ENCODE measurements at regions of chr3 and their contacts with region 1.

Region 1: DNA sequence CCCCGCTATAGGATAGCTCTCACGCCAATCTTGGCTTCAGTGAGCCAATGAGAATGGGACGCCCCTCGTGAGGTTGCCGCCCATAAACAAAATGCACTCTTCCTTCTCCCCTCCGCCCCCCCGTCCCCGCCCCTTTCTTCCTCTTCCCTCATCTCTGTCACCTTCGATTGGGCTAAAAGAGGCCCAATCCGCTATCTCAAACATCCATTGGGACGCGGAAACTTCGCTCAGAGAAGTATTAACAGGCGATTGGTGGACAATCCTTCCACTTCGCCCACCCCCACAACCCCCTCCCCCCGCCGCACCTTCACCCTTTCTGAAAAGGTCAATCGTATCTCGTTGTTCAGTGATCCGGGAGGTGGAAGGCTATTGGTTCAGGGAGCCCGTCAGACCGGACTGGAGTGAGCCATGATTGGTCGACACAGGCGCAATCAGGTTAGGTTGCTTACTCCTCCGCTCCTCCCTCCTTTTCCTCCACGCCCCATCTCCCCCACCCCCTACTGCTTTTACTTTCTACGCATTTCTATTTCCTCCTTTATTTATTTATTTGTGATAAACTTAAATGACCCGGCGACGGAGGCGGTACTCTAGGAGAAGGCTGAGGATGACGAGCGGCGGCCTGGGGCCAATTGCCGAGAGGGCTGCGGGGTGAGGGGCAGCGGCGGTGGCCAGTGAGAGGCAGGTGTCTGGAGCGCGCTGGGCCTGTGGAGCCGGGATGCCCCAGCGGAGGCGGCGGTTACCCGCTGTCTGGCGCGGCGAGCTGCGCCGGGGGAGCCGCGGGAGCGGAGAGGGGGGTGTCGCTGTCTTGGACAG is 447 bp upstream of the ZBTB20 start:
- DNase-seq: peak; percentile 100
- H3K4me3 ChIP-seq: peak overlapping the region; percentile 81 to 96 (median 93)
- H3K27ac ChIP-seq: peak overlapping the region; percentile 97
- H3K4me1 ChIP-seq: peaks cover 6% of the 10 kb centered on the region
- H3K27me3 ChIP-seq: no peaks in the 10 kb centered on the region
- CTCF ChIP-seq: no peak
- POLR2A ChIP-seq: peak; percentile 60

Region 2: GRCh38 chr3:113696658-113697499 is 1450.7 kb before region 1 on chr3:
- CTCF ChIA-PET with region 1: no interaction called
- POLR2A ChIA-PET with region 1: no interaction called
- dilution Hi-C with region 1: no loop called
- intact Hi-C with region 1: loop called (anchors 2 kb)
- DNase-seq: peak; percentile 100
- H3K4me3 ChIP-seq: peak overlapping the region; percentile 37 to 94 (median 90)
- H3K27ac ChIP-seq: peak overlapping the region; percentile 30
- H3K4me1 ChIP-seq: peaks cover 14% of the 10 kb centered on the region
- H3K27me3 ChIP-seq: no peaks in the 10 kb centered on the region
- CTCF ChIP-seq: peak in 1 of 2 donors; percentile 14
- POLR2A ChIP-seq: no peak

Region 3: DNA sequence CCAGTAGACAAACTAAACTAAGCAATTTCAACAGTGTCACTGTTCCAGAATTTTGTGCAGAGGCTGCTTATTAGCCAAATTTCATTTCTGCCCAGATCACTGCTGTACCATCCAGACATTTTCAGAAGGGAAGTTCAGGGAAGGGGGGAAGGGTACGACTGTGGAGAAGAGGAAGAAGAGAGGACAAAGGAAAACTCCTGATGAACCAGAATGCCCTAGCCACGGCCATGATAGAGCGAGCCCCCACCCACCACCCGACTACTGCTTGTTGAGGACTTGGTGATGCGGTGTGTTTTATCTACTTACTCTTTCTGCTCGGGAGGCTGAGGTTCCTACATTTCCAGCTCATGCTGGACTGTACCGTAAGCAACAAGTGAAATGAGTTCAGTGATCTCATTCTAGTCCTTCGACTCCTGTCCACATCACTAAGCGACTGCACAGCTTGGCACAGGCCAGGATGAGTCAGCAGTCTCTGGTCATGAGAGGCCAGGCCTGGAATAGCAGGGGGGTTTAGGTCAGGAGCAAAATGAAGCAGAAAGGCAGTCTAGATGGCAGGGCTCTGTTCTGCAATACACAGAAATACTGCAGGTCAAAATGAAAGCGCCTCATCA is 522.9 kb before region 1 on chr3:
- CTCF ChIA-PET with region 1: no interaction called
- POLR2A ChIA-PET with region 1: no interaction called
- dilution Hi-C with region 1: no loop called
- intact Hi-C with region 1: loop called (anchors 2 kb)
- DNase-seq: peak; percentile 97
- H3K4me3 ChIP-seq: peak overlapping the region; percentile 21 to 88 (median 50)
- H3K27ac ChIP-seq: peak overlapping the region; percentile 99
- H3K4me1 ChIP-seq: peaks cover 36% of the 10 kb centered on the region
- H3K27me3 ChIP-seq: no peaks in the 10 kb centered on the region
- CTCF ChIP-seq: no peak
- POLR2A ChIP-seq: no peak

Region 4: DNA sequence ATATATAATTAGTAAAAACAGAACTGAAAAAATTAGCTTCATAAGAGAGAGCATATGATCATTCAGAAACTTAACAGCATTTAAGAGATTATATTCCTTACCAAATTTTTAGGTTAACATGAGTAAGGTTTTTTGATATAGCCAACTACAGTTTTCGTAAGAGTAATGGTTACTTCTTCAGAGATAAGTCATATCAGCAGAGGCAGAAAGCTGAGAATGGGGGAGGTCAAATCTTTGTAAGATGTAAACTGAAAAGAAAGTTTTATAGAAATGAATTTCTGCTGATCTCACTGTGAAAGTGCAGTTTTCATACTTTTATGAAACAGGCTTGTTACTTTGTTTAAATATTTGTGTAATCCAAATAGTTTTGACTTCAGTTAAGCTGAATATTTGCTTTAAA is 193.7 kb before region 1 on chr3:
- CTCF ChIA-PET with region 1: no interaction called
- POLR2A ChIA-PET with region 1: no interaction called
- dilution Hi-C with region 1: no loop called
- intact Hi-C with region 1: no loop called
- DNase-seq: no peak
- H3K4me3 ChIP-seq: no peak overlapping the region
- H3K27ac ChIP-seq: no peak overlapping the region
- H3K4me1 ChIP-seq: no peaks in the 10 kb centered on the region
- H3K27me3 ChIP-seq: no peaks in the 10 kb centered on the region
- CTCF ChIP-seq: no peak
- POLR2A ChIP-seq: no peak

Region 5: GRCh38 chr3:115108614-115109013 is 38.9 kb before region 1 on chr3:
- CTCF ChIA-PET with region 1: no interaction called
- POLR2A ChIA-PET with region 1: no interaction called
- dilution Hi-C with region 1: no loop called
- intact Hi-C with region 1: loop called (anchors 2 kb)
- DNase-seq: peak; percentile 22
- H3K4me3 ChIP-seq: no peak overlapping the region
- H3K27ac ChIP-seq: no peak overlapping the region
- H3K4me1 ChIP-seq: no peaks in the 10 kb centered on the region
- H3K27me3 ChIP-seq: no peaks in the 10 kb centered on the region
- CTCF ChIP-seq: no peak
- POLR2A ChIP-seq: no peak

Region 6: DNA sequence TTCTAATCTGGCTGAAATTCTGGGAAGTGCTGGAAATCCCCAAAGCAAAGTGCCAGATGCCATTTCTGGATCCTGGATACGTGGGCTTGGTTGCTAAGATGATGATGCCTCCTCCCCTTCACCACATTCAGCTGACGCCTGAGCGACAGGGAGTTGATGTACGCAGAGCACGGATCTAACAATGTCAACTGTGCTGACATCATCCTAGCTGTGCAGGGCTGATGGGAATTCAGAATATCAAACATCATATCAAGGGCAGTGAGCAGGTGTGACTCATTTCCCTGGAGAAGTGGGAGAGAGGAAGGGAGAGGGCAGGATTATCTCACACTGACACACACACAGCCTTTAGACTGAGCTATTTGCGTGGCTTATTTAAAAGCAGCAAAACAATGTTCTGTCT is 92.2 kb after region 1 on chr3:
- CTCF ChIA-PET with region 1: no interaction called
- POLR2A ChIA-PET with region 1: no interaction called
- dilution Hi-C with region 1: no loop called
- intact Hi-C with region 1: loop called (anchors 1 kb)
- DNase-seq: peak; percentile 99
- H3K4me3 ChIP-seq: no peak overlapping the region
- H3K27ac ChIP-seq: peak overlapping the region; percentile 70
- H3K4me1 ChIP-seq: peaks cover 20% of the 10 kb centered on the region
- H3K27me3 ChIP-seq: no peaks in the 10 kb centered on the region
- CTCF ChIP-seq: no peak
- POLR2A ChIP-seq: no peak

Region 7: GRCh38 chr3:115251509-115251908 is 104.0 kb after region 1 on chr3:
- CTCF ChIA-PET with region 1: no interaction called
- POLR2A ChIA-PET with region 1: no interaction called
- dilution Hi-C with region 1: no loop called
- intact Hi-C with region 1: no loop called
- DNase-seq: peak; percentile 14
- H3K4me3 ChIP-seq: no peak overlapping the region
- H3K27ac ChIP-seq: no peak overlapping the region
- H3K4me1 ChIP-seq: peaks cover 32% of the 10 kb centered on the region
- H3K27me3 ChIP-seq: no peaks in the 10 kb centered on the region
- CTCF ChIP-seq: no peak
- POLR2A ChIP-seq: no peak

Region 8: GRCh38 chr3:115350606-115351005 is 203.1 kb after region 1 on chr3:
- CTCF ChIA-PET with region 1: no interaction called
- POLR2A ChIA-PET with region 1: no interaction called
- dilution Hi-C with region 1: no loop called
- intact Hi-C with region 1: no loop called
- DNase-seq: peak; percentile 86
- H3K4me3 ChIP-seq: no peak overlapping the region
- H3K27ac ChIP-seq: no peak overlapping the region
- H3K4me1 ChIP-seq: peaks cover 26% of the 10 kb centered on the region
- H3K27me3 ChIP-seq: no peaks in the 10 kb centered on the region
- CTCF ChIP-seq: no peak
- POLR2A ChIP-seq: no peak

Region 9: GRCh38 chr3:115658337-115659181 is 511.0 kb after region 1 on chr3:
- CTCF ChIA-PET with region 1: no interaction called
- POLR2A ChIA-PET with region 1: no interaction called
- dilution Hi-C with region 1: no loop called
- intact Hi-C with region 1: loop called (anchors 1 kb)
- DNase-seq: peak; percentile 82
- H3K4me3 ChIP-seq: peak overlapping the region; percentile 74 to 91 (median 82)
- H3K27ac ChIP-seq: peak overlapping the region; percentile 80
- H3K4me1 ChIP-seq: peaks cover 12% of the 10 kb centered on the region
- H3K27me3 ChIP-seq: peaks cover 7 to 8% of the 10 kb centered on the region in 2 experiments
- CTCF ChIP-seq: no peak
- POLR2A ChIP-seq: peak; percentile 51

Region 10: DNA sequence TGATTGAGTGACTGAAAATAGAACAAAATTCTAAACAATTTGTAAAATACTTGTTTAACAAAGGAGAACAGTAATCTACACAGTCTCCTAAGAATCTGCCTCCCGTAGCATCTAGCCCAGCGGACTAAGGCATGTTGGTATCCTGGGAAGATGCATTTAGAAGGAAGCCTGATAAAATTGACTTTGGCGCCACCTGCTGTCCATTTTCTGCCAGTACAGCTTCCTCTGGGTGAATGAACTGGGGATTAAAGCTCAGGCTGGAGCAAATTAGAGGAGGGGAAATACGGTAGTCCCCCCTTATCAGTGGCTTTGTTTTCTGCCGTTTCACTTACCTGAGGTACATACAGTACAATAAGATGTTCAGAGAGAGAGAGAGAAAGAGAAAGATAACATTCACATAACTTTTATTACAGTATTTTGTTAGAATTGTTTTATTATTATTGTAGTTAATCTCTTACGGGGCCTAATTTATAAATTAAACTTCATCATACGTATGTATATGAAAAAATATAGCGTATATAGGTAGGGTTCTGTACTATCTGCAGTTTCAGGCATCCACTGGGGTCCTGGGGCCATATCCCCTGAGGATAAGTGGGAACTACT is 667.3 kb after region 1 on chr3:
- CTCF ChIA-PET with region 1: no interaction called
- POLR2A ChIA-PET with region 1: no interaction called
- dilution Hi-C with region 1: no loop called
- intact Hi-C with region 1: loop called (anchors 2 kb)
- DNase-seq: peak; percentile 71
- H3K4me3 ChIP-seq: no peak overlapping the region
- H3K27ac ChIP-seq: no peak overlapping the region
- H3K4me1 ChIP-seq: no peaks in the 10 kb centered on the region
- H3K27me3 ChIP-seq: peaks cover 10 to 11% of the 10 kb centered on the region in 2 experiments
- CTCF ChIP-seq: peak; percentile 76 to 93
- POLR2A ChIP-seq: no peak

Measured in endothelial cell of umbilical vein (primary cell).